ENCODE measurements at regions of chr4 and their contacts with region 1.

Region 1: DNA sequence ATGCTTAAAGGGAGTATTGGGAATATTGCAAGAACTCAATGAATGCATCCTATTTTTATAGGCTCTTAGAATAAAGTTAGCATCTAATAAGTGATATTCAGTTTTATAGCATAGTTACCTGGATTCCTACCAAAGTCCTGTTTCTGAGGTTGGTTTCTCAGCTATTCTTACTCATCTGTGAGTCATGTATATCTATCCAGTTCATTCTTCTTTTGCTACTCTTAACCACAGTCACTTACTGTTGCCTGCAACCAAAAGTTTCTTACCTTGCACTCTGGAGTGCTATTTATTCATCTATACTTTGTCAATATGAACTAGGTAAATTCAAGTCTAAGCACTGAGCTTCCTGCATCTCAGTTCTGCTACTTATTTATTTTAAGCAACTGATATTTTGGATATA is 322.5 kb downstream of the HS3ST1 start:
- DNase-seq: no peak
- ATAC-seq: no peak
- H3K4me3 ChIP-seq: no peak overlapping the region
- H3K4me3 Mint-ChIP-seq: no peak overlapping the region
- H3K27ac ChIP-seq: peak overlapping the region in 1 of 2 donors; percentile 19
- H3K27ac Mint-ChIP-seq: no peak overlapping the region
- H3K4me1 ChIP-seq: peaks cover 15 to 16% of the 10 kb centered on the region in 2 donors
- H3K4me1 Mint-ChIP-seq: peaks cover 45% of the 10 kb centered on the region
- H3K27me3 ChIP-seq: no peaks in the 10 kb centered on the region
- H3K27me3 Mint-ChIP-seq: no peaks in the 10 kb centered on the region
- CTCF ChIP-seq: no peak

Region 2: GRCh38 chr4:11138964-11139363 is 32.8 kb after region 1 on chr4:
- CTCF ChIA-PET with region 1: no interaction called
- POLR2A ChIA-PET with region 1: interaction called, 4 read pairs
- intact Hi-C with region 1: loop called (anchors 2 kb)
- DNase-seq: peak; percentile 67
- ATAC-seq: peak; percentile 82
- H3K4me3 ChIP-seq: peak overlapping the region in 1 of 5 experiments; percentile 43
- H3K4me3 Mint-ChIP-seq: peak overlapping the region; percentile 46
- H3K27ac ChIP-seq: peak overlapping the region; percentile 66 to 86
- H3K27ac Mint-ChIP-seq: peak overlapping the region; percentile 33
- H3K4me1 ChIP-seq: peaks cover 35 to 47% of the 10 kb centered on the region in 2 donors
- H3K4me1 Mint-ChIP-seq: peaks cover 63% of the 10 kb centered on the region
- H3K27me3 ChIP-seq: no peaks in the 10 kb centered on the region
- H3K27me3 Mint-ChIP-seq: no peaks in the 10 kb centered on the region
- CTCF ChIP-seq: no peak

Region 3: GRCh38 chr4:11471618-11472017 is 365.4 kb after region 1 on chr4:
- CTCF ChIA-PET with region 1: no interaction called
- POLR2A ChIA-PET with region 1: no interaction called
- intact Hi-C with region 1: loop called (anchors 5 kb)
- DNase-seq: peak; percentile 81
- ATAC-seq: peak; percentile 82
- H3K4me3 ChIP-seq: peak overlapping the region; percentile 2 to 59 (median 53)
- H3K4me3 Mint-ChIP-seq: peak overlapping the region; percentile 86
- H3K27ac ChIP-seq: peak overlapping the region; percentile 74 to 81
- H3K27ac Mint-ChIP-seq: peak overlapping the region; percentile 96
- H3K4me1 ChIP-seq: peaks cover 39 to 42% of the 10 kb centered on the region in 2 donors
- H3K4me1 Mint-ChIP-seq: peaks cover 47% of the 10 kb centered on the region
- H3K27me3 ChIP-seq: no peaks in the 10 kb centered on the region
- H3K27me3 Mint-ChIP-seq: no peaks in the 10 kb centered on the region
- CTCF ChIP-seq: no peak

Region 4: GRCh38 chr4:12409507-12410190 is 1303.5 kb after region 1 on chr4:
- CTCF ChIA-PET with region 1: no interaction called
- POLR2A ChIA-PET with region 1: no interaction called
- intact Hi-C with region 1: no loop called
- DNase-seq: no peak
- ATAC-seq: no peak
- H3K4me3 ChIP-seq: no peak overlapping the region
- H3K4me3 Mint-ChIP-seq: no peak overlapping the region
- H3K27ac ChIP-seq: no peak overlapping the region
- H3K27ac Mint-ChIP-seq: no peak overlapping the region
- H3K4me1 ChIP-seq: no peaks in the 10 kb centered on the region
- H3K4me1 Mint-ChIP-seq: no peaks in the 10 kb centered on the region
- H3K27me3 ChIP-seq: no peaks in the 10 kb centered on the region
- H3K27me3 Mint-ChIP-seq: no peaks in the 10 kb centered on the region
- CTCF ChIP-seq: no peak